ENCODE measurements at regions of chr17 and their contacts with region 1.

Region 1: GRCh38 chr17:4565209-4566141 is 5.1 kb upstream of the GGT6 start:
- DNase-seq: peak; percentile 54 to 70
- H3K4me3 ChIP-seq: no peak overlapping the region
- H3K27ac ChIP-seq: no peak overlapping the region
- H3K4me1 ChIP-seq: peaks cover 4% of the 10 kb centered on the region; the same call in 1 of the 2 replicates
- H3K27me3 ChIP-seq: no peaks in the 10 kb centered on the region
- CTCF ChIP-seq: peak; percentile 94

Region 2: DNA sequence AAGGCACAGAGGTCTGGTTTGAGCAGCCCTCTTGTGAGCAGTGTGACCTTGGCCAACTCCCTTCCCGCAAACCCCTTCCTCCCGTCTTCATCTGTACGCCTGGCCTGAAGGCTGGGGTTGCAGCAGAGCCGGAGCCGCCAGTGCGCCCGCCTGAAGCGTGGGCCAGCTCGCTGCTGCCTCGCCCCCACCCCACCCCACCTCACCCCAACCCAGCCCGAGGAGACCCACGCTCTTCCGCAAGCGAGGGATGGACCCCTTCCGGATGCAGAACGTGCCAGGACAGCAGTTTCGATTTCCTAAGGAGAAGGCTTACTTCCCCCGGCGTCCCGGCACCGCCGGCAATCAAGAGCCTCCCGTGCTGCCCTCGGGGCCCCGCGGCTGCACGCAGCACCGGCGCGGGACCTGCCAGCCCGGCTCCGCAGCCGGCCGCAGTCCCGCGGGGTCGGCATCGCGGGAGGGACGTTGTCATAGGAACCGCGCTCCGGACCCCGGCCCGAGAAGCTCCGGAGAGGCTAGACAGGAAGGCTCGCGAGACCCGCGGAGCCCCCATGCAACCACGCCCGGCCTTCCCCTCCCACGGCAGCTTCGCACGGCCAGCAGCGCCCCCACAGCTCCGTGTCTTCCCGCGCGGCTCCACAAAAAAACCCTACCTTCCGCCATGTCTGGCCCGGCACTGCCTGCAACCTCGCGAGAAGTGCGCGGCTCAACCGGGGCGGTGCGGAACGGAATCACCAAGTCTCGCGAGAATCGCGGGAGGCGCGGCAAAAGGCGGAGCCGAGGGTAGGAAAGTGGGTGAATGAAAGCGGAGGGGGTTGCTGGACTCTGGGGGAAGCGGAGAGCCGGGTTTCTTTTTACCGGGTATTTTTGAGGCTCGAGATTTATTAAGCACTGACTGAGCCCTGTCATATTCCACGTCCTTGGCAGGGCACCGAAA is 301.9 kb before region 1 on chr17 and contains the start of gene ANKFY1:
- CTCF ChIA-PET with region 1: interaction called, 7 read pairs
- POLR2A ChIA-PET with region 1: interaction called, 19 read pairs
- intact Hi-C with region 1: no loop called
- DNase-seq: peak; percentile 85 to 98
- H3K4me3 ChIP-seq: peak within 1 kb of the TSS; percentile 64
- H3K27ac ChIP-seq: peak within 1 kb of the TSS; percentile 46
- H3K4me1 ChIP-seq: peaks cover 14% of the 10 kb centered on the region
- H3K27me3 ChIP-seq: no peaks in the 10 kb centered on the region
- CTCF ChIP-seq: no peak
- total RNA-seq, gene ANKFY1: 63.9 and 74.5 TPM in 2 replicates

Region 3: GRCh38 chr17:4389079-4389478 is 176.4 kb before region 1 on chr17:
- CTCF ChIA-PET with region 1: no interaction called
- POLR2A ChIA-PET with region 1: no interaction called
- intact Hi-C with region 1: no loop called
- DNase-seq: peak; percentile 36 to 45
- H3K4me3 ChIP-seq: no peak overlapping the region
- H3K27ac ChIP-seq: no peak overlapping the region
- H3K4me1 ChIP-seq: peaks cover 38% of the 10 kb centered on the region
- H3K27me3 ChIP-seq: no peaks in the 10 kb centered on the region
- CTCF ChIP-seq: no peak

Region 4: DNA sequence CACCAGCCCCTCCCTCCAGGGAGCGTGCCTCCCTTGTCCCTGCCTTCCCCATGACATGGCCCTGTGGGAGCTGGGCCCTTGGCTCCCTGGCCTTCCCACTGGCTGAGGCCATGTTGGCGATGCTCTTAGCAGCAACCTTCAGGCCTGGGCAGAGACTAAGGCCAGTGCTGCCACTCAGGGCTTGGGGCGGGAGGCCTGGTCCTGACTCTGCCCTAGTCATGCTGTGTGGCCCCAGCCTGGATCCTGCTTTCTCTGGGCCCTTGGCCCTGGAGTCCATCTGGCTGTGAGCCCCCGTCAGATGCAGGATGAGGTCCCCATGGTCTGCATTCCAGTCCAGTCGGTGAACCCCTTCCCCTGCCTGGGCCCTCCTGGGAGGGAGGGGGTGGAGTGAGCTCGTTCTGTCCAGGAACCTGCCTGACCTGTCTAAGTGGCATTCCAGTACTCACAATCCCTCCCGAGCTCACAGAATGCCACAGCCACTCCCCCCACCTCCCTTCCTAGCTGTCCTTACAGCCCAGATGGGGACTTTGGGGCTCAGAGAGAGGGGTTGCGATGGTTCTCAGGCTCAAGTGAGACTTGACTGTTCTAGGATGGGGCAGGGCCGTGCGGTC is 51.4 kb before region 1 on chr17:
- CTCF ChIA-PET with region 1: interaction called, 5 read pairs
- POLR2A ChIA-PET with region 1: no interaction called
- intact Hi-C with region 1: loop called (anchors 1 kb)
- DNase-seq: peak; percentile 92 to 93
- H3K4me3 ChIP-seq: peak overlapping the region; percentile 47; the same call in 1 of the 2 replicates
- H3K27ac ChIP-seq: peak overlapping the region; percentile 100
- H3K4me1 ChIP-seq: peaks cover 79% of the 10 kb centered on the region
- H3K27me3 ChIP-seq: no peaks in the 10 kb centered on the region
- CTCF ChIP-seq: no peak

Region 5: DNA sequence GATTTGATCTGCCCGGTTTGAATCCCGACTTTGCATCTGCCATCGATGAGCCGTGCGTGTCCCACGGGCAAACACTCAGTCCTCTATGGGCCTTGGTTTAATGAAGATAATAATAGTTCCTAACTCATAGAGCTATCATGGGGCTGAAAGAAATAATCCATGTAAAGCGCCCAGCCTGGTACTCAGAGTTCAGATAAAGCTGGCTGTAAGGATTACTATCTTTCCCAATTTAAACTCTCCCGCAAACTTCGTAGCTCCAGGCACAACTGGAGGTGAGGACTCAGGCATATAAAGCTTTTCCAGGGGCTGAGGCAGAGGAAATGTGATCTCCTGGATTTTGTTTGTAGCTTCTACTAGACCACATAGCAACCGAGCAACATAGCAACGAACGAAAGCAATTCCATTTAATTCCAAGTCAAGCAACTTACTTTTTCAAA is 59.7 kb after region 1 on chr17:
- CTCF ChIA-PET with region 1: interaction called, 10 read pairs
- POLR2A ChIA-PET with region 1: no interaction called
- intact Hi-C with region 1: loop called (anchors 1 kb)
- DNase-seq: no peak
- H3K4me3 ChIP-seq: no peak overlapping the region
- H3K27ac ChIP-seq: no peak overlapping the region
- H3K4me1 ChIP-seq: no peaks in the 10 kb centered on the region
- H3K27me3 ChIP-seq: peaks cover 9% of the 10 kb centered on the region; the same call in 1 of the 2 replicates
- CTCF ChIP-seq: no peak

Region 6: DNA sequence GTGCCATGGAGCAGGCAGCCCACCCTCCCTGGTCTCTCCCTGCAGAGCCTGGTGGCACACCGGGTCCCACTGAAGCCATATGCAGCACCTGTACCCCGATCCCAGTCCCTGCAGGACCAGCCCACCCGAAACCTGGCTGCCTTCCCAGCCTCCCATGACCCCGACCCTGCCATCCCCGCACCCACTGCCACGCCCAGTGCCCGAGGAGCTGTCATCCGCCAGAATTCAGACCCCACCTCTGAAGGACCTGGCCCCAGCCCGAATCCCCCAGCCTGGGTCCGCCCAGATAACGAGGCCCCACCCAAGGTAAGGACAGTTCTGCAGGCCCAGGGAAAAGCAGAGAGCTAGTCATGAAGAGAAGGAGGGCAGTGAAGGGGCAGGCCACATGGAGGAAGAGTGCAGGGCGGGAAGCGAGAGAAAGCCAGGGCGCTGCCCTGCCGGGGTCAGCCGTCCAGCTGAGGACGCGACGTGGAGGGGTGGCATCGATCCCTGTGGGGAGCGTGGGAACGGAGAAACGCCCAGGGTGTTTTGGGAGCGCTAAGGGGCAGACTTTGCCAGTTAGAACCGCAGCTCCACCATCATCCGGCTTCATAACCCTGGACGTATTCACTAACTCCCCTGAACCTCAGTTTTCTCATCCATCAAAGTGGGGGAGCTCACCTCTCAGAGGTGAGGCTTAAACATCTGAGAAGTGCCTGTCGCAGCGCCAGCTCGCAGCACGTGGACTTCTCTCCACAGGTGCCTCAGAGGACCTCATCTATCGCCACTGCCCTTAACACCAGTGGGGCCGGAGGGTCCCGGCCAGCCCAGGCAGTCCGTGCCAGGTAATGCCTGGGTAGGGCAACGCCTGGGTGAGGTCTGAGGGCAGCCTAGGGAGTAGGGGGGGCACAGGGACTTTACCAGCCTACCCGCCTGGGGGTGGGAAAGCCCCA is 326.2 kb after region 1 on chr17:
- CTCF ChIA-PET with region 1: no interaction called
- POLR2A ChIA-PET with region 1: no interaction called
- intact Hi-C with region 1: loop called (anchors 2 kb)
- DNase-seq: no peak
- H3K4me3 ChIP-seq: no peak overlapping the region
- H3K27ac ChIP-seq: no peak overlapping the region
- H3K4me1 ChIP-seq: no peaks in the 10 kb centered on the region
- H3K27me3 ChIP-seq: no peaks in the 10 kb centered on the region
- CTCF ChIP-seq: no peak

Region 7: DNA sequence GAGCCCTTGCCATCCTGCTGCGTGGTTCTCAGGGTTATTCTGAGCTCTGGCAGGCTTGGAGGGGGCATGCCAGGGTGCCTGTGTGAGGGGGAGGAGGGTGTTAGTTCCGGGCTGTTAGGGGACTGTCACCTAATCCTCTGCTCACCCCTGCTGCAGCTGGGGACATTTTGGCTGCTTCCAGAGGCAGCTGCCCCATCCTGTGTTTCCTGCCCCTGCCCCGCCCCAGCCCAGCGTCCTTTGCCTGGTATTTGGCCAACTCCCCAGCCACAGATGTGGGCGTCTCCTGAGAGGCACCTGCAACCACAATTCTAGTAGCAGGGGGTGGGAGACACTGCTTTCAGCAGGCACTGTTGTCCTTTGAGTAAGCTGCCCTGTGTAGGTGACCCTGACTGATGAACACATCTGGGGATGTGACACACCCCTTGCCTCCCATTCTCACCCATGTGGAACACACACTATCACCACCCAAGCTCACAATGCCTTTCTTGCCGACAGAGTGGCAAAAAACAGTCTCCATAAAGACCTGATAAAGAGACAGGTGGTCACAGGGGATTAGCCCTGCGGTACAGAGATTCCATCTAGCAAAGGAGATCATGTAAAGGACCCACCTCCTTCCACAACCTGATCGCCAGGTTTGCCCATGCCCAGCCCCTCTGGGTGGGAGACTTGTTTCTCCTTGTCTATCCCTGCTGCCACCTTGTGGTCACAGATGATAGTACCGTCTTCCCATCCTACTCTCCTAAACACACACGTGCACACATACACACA is 337.8 kb after region 1 on chr17 and contains the start of gene CHRNE:
- CTCF ChIA-PET with region 1: no interaction called
- POLR2A ChIA-PET with region 1: no interaction called
- intact Hi-C with region 1: loop called (anchors 5 kb)
- DNase-seq: peak; percentile 62 to 83
- H3K4me3 ChIP-seq: no peak within 1 kb of the TSS
- H3K27ac ChIP-seq: 0 out of 2 replicates have a peak within 1 kb of the TSS, but pooled peaks have one; percentile 7
- H3K4me1 ChIP-seq: peaks cover 13% of the 10 kb centered on the region
- H3K27me3 ChIP-seq: no peaks in the 10 kb centered on the region
- CTCF ChIP-seq: peak; percentile 94
- total RNA-seq, gene CHRNE: 0.23 and 0.24 TPM in 2 replicates

Measured in PC-9 (cell line).